ENCODE measurements at regions of chr5 and their contacts with region 1.

Region 1: DNA sequence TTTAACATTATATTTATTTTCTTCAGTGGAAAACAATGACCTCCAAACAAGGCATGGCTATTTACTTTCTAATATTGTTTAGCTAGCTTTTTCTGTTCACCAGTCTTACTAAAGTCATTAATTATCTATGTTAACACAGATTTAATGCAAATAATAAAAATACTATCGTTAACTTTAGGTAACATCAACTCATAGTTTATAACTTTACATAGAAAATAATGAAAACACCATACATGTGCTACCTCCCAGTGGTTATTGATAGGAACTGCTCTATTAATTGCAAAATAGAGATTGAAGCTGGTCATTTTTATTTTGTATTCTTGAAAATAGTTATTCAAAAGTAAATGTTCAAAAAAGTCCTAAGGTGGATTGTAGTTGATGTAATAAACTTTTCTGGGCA is 78.3 kb upstream of the HCN1 start:
- DNase-seq: no peak
- ATAC-seq: no peak

Region 2: DNA sequence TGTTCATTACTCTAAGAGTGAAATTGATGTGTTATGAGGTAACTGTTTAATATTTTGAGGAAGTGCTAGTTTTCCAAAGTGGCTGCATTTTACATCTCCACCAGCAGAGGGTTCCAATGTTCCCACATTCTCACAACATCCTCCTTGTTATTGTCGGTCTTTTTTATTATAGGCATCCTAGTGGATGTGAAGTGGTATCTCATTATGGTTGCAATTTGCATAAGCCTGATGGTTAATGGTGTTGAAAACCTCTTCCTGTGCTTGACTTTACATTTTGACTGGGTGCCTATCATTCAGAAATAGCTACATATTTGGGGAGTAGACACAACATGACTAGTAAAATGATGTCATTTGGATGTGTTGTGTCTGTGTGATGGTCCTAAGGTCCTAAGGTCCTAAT is 822.2 kb before region 1 on chr5:
- intact Hi-C with region 1: loop called (anchors 5 kb)
- DNase-seq: no peak
- ATAC-seq: no peak

Region 3: GRCh38 chr5:45672271-45672670 is 102.3 kb before region 1 on chr5:
- intact Hi-C with region 1: no loop called
- DNase-seq: no peak
- ATAC-seq: no peak

Region 4: GRCh38 chr5:45741110-45741509 is 33.4 kb before region 1 on chr5:
- intact Hi-C with region 1: no loop called
- DNase-seq: no peak
- ATAC-seq: no peak

Measured in Right ventricle myocardium inferior (tissue), 1 donor.